Activated T-helper 1 cell treated with anti-CD3 and anti-CD28 coated beads, Interleukin-12 subunit alpha, Interleukin-12 subunit beta, Interleukin-2, Interleukin-4 antibody, amounts not matched to agents 30 ng/mL and 10 ng/mL and 1 ng/mL, durations not matched to agents 14 hours and 24 hours and 36 hours (primary cell): ENCODE measurements at regions of chr11 and their contacts with region 1.

Region 1: GRCh38 chr11:65314501-65315203 is at the start of gene CDC42EP2:
- DNase-seq: peak; percentile 72
- H3K4me3 Mint-ChIP-seq: peak within 1 kb of the TSS; percentile 73
- H3K27ac Mint-ChIP-seq: no peak within 1 kb of the TSS
- H3K4me1 Mint-ChIP-seq: peaks cover 7% of the 10 kb centered on the region
- H3K27me3 Mint-ChIP-seq: peaks cover 10% of the 10 kb centered on the region
- total RNA-seq, gene CDC42EP2: 1.6 and 2.7 TPM in 2 replicates

Region 2: GRCh38 chr11:65225279-65226102 is 89.2 kb before region 1 on chr11:
- intact Hi-C with region 1: loop called (anchors 1 kb)
- DNase-seq: peak; percentile 34
- H3K4me3 Mint-ChIP-seq: peak overlapping the region; percentile 79
- H3K27ac Mint-ChIP-seq: no peak overlapping the region
- H3K4me1 Mint-ChIP-seq: peaks cover 9% of the 10 kb centered on the region
- H3K27me3 Mint-ChIP-seq: peaks cover 26% of the 10 kb centered on the region

Region 3: GRCh38 chr11:65251476-65251875 is 63.2 kb before region 1 on chr11:
- intact Hi-C with region 1: no loop called
- DNase-seq: no peak
- H3K4me3 Mint-ChIP-seq: no peak overlapping the region
- H3K27ac Mint-ChIP-seq: no peak overlapping the region
- H3K4me1 Mint-ChIP-seq: peaks cover 5% of the 10 kb centered on the region
- H3K27me3 Mint-ChIP-seq: peaks cover 13% of the 10 kb centered on the region

Region 4: DNA sequence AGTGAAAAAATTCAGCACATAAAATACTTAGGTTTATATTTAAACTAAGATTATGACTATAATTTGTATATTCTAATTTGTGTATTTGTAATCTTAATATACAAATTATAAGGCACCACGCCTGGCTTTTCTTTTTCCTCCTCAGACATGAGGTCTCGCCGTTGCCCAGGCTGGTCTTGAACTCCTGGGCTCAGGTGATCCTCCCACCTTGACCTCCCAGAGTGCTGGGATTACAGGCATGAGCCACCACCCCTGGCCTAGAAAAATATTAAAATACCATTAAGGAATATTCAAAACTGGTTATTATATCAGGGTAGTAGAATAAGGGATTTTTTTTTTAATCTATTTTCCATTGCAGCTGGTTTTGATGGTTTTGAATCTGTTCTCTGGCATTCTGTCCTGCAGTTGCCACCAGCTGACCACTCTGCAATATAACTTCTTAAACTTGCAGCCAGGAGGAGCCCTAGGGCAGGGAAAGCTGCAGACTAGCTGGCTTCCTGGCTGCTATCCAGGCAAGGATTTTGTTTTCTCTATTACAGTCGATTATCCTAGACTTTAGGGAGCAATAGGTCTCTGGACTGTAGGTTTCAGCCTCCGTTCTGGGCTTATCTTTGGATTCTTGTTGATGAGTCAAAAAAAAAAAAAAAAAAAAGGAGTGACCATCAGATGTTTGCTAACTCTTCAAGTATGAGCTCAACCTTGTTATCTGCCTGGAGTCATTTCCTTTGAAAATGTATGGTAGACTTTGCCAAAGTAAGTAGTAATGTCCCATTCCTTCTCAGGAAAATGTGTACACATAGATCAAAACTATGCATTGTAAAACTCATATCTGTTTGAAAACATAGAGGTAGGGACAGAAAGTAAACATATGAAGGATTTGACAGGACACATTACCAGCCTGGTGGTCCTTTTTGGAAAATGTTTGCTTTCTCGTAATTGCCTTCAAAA is 39.6 kb before region 1 on chr11:
- intact Hi-C with region 1: loop called (anchors 1 kb)
- DNase-seq: no peak
- H3K4me3 Mint-ChIP-seq: no peak overlapping the region
- H3K27ac Mint-ChIP-seq: no peak overlapping the region
- H3K4me1 Mint-ChIP-seq: peaks cover 16% of the 10 kb centered on the region
- H3K27me3 Mint-ChIP-seq: no peaks in the 10 kb centered on the region

Region 5: DNA sequence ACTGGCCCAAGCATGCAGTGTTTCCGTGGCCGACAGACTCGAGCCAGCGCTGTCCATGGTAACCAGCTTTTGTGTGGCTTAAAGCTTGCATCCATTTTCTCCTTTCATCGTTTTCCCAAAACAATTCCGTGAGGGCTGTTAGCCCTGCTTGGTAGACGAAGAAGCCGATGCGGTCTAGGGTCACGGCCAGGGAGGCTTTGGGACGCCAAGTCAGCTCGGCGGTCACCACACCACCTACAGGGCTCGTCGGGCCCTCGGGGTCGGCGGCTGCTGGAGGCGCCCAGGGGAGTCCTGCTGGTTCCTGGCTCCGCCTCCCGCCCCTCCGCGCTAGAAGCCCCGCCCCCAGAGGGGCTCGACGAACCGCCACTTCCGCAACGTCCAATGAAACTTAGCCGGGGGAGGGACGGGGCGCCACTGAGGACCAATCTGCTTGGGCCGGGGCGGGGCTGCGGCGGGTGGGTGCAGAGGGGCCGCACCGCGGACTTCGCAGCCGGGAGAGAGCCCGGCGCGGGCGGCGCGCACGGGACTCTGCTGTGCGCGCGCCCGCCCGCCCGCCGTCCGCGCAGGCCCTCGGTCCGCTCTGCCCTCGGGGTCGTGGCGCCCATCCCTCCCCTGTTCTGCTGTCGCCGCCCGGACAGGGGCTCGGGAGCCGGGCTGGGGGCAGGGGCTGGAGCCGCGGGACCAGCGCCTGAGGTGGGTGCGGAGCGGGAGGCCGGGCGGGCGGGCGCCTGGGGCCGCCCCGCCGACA is 39.8 kb after region 1 on chr11 and contains the start of gene TIGD3:
- intact Hi-C with region 1: loop called (anchors 2 kb)
- DNase-seq: peak; percentile 93
- H3K4me3 Mint-ChIP-seq: peak within 1 kb of the TSS; percentile 89
- H3K27ac Mint-ChIP-seq: peak within 1 kb of the TSS; percentile 81
- H3K4me1 Mint-ChIP-seq: peaks cover 8% of the 10 kb centered on the region
- H3K27me3 Mint-ChIP-seq: peaks cover 16% of the 10 kb centered on the region
- total RNA-seq, gene TIGD3: 1.1 TPM in 2 replicates